ENCODE measurements at regions of chr9 and their contacts with region 1.

Region 1: GRCh38 chr9:133509179-133510079 is 15.3 kb downstream of the MYMK start:
- DNase-seq: no peak
- H3K4me3 ChIP-seq: peak overlapping the region in 1 of 4 experiments; percentile 37; a peak in 2 of 8 replicates
- H3K27ac ChIP-seq: no peak overlapping the region
- H3K4me1 ChIP-seq: peaks cover 0 to 18% (median 14%) of the 10 kb centered on the region in 4 experiments; a peak in 6 of 7 replicates
- H3K27me3 ChIP-seq: peaks cover 0 to 2% (median 0%) of the 10 kb centered on the region in 4 experiments; a peak in 2 of 7 replicates
- CTCF ChIP-seq: no peak
- EP300 ChIP-seq: no peak
- POLR2A ChIP-seq: no peak
- RAD21 ChIP-seq: no peak

Region 2: DNA sequence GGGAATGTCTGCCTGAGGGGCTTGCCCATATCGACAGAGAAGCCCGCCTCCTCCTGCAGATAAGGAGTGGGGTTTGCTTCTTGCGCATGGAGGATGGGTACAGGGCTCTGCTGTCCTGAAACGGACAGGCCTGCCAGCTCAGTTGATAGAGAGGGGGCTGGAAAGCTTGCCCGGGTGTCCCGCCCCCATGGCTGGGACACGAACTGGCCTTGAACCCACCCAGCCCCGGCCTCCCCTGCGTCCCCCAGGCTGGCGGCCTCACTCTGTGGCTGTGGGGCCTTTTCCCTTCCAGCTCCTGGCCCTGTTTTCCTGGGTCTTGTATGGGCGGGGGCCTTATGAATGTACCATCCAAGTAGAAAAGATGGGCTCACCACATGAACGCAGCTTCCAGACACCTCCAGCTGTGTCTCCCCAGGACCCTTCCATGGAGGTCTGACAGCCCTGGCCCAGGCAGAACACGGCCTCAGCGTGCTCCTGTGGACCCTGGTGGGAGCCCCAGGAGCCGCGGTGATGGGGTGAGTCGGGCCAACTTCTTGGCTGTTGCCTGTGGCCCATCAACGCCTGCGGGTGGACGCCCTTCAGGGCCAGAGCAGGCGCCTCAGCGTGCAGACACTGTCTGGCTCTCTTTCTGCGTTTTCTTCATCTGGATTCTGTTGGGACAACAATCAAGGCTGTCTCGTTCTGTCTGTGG is 14.6 kb before region 1 on chr9:
- CTCF ChIA-PET with region 1: interaction called, 13 read pairs
- POLR2A ChIA-PET with region 1: no interaction called
- DNase-seq: no peak
- H3K4me3 ChIP-seq: no peak overlapping the region
- H3K27ac ChIP-seq: no peak overlapping the region
- H3K4me1 ChIP-seq: no peaks in the 10 kb centered on the region; a peak in 1 of 7 replicates
- H3K27me3 ChIP-seq: peaks cover 0 to 2% (median 0%) of the 10 kb centered on the region in 4 experiments; a peak in 1 of 7 replicates
- CTCF ChIP-seq: no peak
- EP300 ChIP-seq: no peak
- POLR2A ChIP-seq: no peak
- RAD21 ChIP-seq: no peak

Measured in H1 (cell line).